ENCODE measurements at regions of chr17 and their contacts with region 1.

Region 1: GRCh38 chr17:43994272-43995149 is 9.9 kb upstream of the NAGS start:
- DNase-seq: peak; percentile 75
- ATAC-seq: peak; percentile 93

Region 2: GRCh38 chr17:43940630-43941029 is 53.9 kb before region 1 on chr17:
- intact Hi-C with region 1: loop called (anchors 10 kb)
- DNase-seq: peak; percentile 53
- ATAC-seq: peak; percentile 47